ENCODE measurements at regions of chr22 and their contacts with region 1.

Region 1: DNA sequence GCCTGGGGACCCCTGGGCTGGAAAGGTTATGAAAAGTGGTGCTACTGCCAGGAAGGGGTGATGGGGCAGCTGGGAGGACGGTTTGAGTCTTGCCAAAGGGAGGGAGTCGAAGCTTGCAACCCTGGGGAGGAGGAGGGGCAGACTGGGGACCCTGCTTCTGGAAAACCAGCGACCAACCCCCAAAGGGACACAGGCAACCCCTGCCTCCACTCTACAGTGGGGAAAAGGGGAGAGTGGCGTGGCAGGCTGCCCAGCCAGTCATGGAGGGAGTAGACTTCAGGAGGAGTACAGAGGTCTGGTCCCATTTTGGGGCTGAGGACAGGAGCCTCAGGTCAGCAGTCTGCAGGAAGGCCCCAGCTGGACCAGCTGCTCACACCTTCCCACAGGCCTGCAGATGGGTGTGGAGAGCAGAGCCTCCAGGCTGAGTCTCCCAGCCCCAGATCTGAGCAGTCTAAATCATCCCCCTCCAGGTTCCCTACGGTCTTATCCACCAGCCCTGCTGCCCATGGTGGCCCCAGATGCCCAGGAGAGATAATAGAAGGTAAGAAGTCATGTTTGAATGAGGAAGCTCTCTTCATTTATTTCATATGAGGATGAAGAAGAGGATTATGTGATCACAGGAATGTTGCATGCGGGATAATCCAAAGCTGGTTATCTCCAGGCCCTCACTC is 3.3 kb downstream of the DDT start:
- DNase-seq: peak in 4 of 6 donors; percentile 53 to 75 (median 60)
- ATAC-seq: no peak
- H3K4me3 ChIP-seq: no peak overlapping the region
- H3K27ac ChIP-seq: peak overlapping the region in 1 of 4 donors; percentile 12
- H3K4me1 ChIP-seq: peaks cover 0 to 7% (median 5%) of the 10 kb centered on the region in 3 donors
- H3K27me3 ChIP-seq: no peaks in the 10 kb centered on the region
- CTCF ChIP-seq: no peak

Region 2: GRCh38 chr22:23431337-23432072 is 539.4 kb before region 1 on chr22:
- intact Hi-C with region 1: no loop called
- DNase-seq: no peak
- ATAC-seq: no peak
- H3K4me3 ChIP-seq: no peak overlapping the region
- H3K27ac ChIP-seq: no peak overlapping the region
- H3K4me1 ChIP-seq: no peaks in the 10 kb centered on the region
- H3K27me3 ChIP-seq: no peaks in the 10 kb centered on the region
- CTCF ChIP-seq: no peak

Region 3: GRCh38 chr22:23922651-23923320 is 48.2 kb before region 1 on chr22:
- intact Hi-C with region 1: loop called in 1 of 3 experiments (anchors 10 kb)
- DNase-seq: no peak
- ATAC-seq: no peak
- H3K4me3 ChIP-seq: no peak overlapping the region
- H3K27ac ChIP-seq: no peak overlapping the region
- H3K4me1 ChIP-seq: no peaks in the 10 kb centered on the region
- H3K27me3 ChIP-seq: no peaks in the 10 kb centered on the region
- CTCF ChIP-seq: no peak

Region 4: DNA sequence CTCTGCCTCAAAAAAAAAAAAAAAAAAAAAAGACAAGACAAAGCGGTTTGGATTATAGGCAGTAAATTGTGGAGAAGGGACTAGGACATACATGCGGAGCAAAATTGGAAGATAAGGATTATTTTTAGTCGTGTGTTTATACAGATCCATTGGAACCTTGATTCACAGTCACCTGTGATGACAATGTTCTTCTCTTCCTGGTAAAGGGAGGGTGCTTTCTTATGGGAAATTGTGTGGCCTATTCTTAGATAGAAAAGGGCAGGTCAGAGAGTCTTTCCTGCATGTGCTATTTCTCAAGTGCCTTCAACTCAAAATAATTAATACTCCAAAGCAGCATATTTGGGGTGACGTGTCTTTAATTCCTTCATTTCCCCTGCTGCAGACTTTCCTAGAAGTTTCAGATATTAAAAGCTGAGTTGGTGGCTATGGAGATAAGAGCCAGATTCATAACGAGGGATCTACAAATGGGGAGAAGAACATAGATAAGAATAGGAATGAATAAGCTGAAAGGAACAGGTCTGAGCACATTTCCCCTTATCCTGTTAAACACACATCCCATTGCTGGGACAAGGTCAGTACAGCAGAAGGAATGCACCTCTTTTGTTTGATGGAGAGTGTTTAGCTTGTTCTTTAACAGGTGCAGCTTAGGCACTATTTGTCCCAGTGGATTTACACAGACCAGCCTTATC is 32.5 kb before region 1 on chr22:
- intact Hi-C with region 1: loop called in 1 of 3 experiments (anchors 5 kb)
- DNase-seq: no peak
- ATAC-seq: peak; percentile 50 to 87 (median 64)
- H3K4me3 ChIP-seq: no peak overlapping the region
- H3K27ac ChIP-seq: no peak overlapping the region
- H3K4me1 ChIP-seq: peaks cover 0 to 6% (median 5%) of the 10 kb centered on the region in 3 donors
- H3K27me3 ChIP-seq: no peaks in the 10 kb centered on the region
- CTCF ChIP-seq: no peak

Region 5: DNA sequence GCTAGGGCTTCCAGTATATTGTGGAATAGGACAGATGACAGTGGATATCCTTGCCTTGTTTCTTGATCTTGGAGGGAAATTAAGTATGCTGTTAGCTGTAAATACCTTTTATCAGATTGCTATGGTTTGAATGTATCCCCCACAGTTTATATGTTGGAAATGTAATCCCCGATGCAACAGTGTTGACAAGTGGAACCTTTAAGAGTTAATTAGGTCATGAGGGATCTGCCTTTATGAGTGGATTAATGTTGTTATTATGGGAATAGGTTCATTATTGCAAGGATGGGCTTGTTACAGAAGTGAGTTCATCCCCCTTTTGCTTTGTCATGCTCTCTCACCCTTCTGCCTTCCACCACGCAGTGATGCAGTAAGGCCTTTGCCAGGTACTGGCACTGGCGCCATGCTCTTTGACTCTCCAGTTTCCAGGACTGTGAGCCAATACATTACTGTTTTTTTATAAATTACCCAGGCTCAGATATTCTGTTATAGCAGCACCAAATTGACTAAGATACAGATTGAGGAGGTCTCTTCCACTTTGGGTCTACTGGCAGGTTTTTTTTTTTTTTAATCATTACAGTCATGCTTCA is 56.5 kb after region 1 on chr22:
- intact Hi-C with region 1: no loop called
- DNase-seq: no peak
- ATAC-seq: peak in 3 of 4 donors; percentile 27 to 63 (median 35)
- H3K4me3 ChIP-seq: no peak overlapping the region
- H3K27ac ChIP-seq: no peak overlapping the region
- H3K4me1 ChIP-seq: no peaks in the 10 kb centered on the region
- H3K27me3 ChIP-seq: no peaks in the 10 kb centered on the region
- CTCF ChIP-seq: no peak